GM10248 (cell line): ENCODE measurements at regions of chr6 and their contacts with region 1.

Region 1: GRCh38 chr6:149823013-149823412 is 41.1 kb downstream of the LRP11 start:
- DNase-seq: no peak
- CTCF ChIP-seq: no peak

Region 2: GRCh38 chr6:149809798-149810197 is 13.2 kb before region 1 on chr6:
- CTCF ChIA-PET with region 1: interaction called, 31 read pairs
- POLR2A ChIA-PET with region 1: no interaction called
- DNase-seq: no peak
- CTCF ChIP-seq: no peak

Region 3: GRCh38 chr6:149834513-149835481 is 11.8 kb after region 1 on chr6:
- CTCF ChIA-PET with region 1: interaction called, 75 read pairs
- POLR2A ChIA-PET with region 1: no interaction called
- DNase-seq: peak; percentile 61
- CTCF ChIP-seq: peak; percentile 86